MCF 10A (cell line): ENCODE measurements at regions of chr19 and their contacts with region 1.

Region 1: DNA sequence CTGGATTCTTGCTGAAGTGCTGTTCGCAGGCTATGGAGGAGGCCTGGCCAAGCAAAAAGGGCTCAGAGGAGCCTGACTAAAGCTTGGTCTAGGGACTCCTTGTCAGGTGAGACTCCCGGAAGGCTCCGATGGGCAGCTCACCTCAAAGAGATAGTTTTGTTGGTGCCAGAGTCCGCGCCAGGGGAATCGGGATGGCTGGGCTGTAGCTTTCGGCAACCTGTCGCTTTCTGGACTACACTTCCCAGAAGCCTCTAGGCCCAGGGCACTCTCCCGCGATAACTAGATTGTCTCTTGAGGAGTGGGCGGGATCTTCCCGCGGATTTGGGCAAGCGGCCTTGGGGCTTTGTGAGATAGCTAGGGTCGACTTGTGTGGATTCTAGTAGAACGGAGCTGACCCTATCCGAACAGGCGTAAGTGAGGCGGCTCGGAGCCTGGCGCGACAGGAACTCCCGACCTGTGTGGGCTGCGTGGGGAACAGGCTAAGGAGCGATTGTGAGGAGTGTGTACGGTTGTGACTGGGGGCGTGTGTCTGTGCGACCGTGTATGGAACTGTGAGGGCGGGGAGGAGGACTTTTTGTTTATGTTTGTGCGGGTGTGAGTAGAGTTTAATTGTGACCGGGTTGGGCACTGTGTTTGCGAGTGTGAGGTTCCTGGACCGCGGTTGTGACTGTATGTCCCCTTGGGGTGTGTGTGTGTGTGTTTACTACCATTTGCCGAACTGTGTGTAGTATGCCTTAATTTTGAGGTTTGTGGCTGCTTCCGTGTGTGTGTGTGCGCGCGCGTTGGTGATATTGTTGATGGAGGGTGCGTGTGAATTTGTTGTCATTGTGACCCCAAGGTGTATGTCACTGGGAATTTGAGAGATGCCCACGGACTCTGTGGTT is at the start of gene ZNF345:
- DNase-seq: peak; percentile 91
- H3K4me3 Mint-ChIP-seq: no peak within 1 kb of the TSS
- H3K27ac Mint-ChIP-seq: no peak within 1 kb of the TSS
- H3K4me1 Mint-ChIP-seq: no peaks in the 10 kb centered on the region
- H3K27me3 Mint-ChIP-seq: no peaks in the 10 kb centered on the region
- CTCF ChIP-seq: no peak
- total RNA-seq, gene ZNF345: 1.1 and 2.0 TPM in 2 replicates

Region 2: GRCh38 chr19:36378625-36379509 is 471.9 kb before region 1 on chr19 and contains the start of gene ZFP14:
- CTCF ChIA-PET with region 1: no interaction called
- POLR2A ChIA-PET with region 1: interaction called, 8 read pairs
- intact Hi-C with region 1: loop called (anchors 10 kb)
- DNase-seq: peak; percentile 96
- H3K4me3 Mint-ChIP-seq: peak within 1 kb of the TSS; percentile 94
- H3K27ac Mint-ChIP-seq: peak within 1 kb of the TSS; percentile 82
- H3K4me1 Mint-ChIP-seq: peaks cover 8% of the 10 kb centered on the region
- H3K27me3 Mint-ChIP-seq: no peaks in the 10 kb centered on the region
- CTCF ChIP-seq: peak; percentile 30
- total RNA-seq, gene ZFP14: 1.5 and 1.7 TPM in 2 replicates

Region 3: DNA sequence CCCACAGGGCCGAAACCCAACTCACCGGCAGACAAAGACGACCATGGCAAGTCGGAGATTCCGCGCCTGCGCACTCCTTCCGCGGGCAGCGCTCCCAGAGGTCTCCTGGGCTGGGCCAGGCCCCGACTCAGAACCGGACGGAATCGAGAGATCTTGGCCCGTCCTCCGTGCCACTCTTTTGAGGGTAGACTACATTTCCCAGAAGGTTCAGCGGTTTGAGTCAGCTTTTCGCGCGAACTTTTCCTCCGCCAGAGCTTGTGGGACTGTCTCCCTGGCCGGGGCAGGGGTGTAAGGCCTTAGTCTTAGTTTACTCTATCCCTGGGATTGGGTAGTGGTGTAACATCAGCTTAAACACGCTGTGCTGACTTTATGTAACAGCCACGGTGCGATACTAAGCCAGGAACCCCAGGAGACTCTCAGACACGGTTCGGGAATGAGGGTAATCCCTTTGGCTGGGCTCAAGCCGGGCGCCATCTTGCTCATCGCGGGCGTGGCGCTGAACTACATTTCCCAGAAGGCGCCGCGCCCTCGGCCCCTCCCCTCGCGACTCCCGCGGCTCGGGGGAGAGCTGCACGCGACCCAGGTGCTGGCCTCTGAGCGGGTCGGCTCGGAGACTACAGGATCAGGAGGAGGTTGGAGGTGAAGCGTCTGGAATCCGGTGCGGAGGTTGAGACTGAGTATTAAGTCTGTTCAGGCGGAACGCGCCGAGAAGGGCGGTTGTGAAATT is 322.4 kb before region 1 on chr19 and contains the start of gene ZNF260:
- CTCF ChIA-PET with region 1: no interaction called
- POLR2A ChIA-PET with region 1: interaction called, 13 read pairs
- intact Hi-C with region 1: loop called (anchors 2 kb)
- DNase-seq: peak; percentile 95
- H3K4me3 Mint-ChIP-seq: peak within 1 kb of the TSS; percentile 96
- H3K27ac Mint-ChIP-seq: peak within 1 kb of the TSS; percentile 99
- H3K4me1 Mint-ChIP-seq: peaks cover 9% of the 10 kb centered on the region
- H3K27me3 Mint-ChIP-seq: no peaks in the 10 kb centered on the region
- CTCF ChIP-seq: no peak
- total RNA-seq, gene ZNF260: 13.8 and 14.5 TPM in 2 replicates

Region 4: DNA sequence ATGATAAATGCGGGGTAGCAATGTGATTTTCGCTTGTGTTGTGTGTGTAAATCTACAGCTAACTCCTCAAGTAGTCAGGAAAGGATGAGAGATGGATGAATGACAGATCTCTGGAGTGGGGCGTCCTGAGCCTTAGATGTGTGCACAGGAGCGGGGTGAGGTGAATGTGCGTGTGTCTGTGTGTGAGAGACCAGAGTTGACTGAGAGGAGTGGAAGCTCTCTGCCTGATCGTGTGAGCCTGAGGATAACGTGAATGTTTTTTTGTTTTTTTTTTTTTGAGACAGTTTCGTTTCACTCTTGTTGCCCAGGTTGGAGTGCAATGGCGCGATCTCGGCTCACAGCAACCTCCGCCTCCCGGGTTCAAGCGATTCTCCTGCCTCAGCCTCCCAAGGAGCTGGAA is 185.0 kb before region 1 on chr19:
- CTCF ChIA-PET with region 1: no interaction called
- POLR2A ChIA-PET with region 1: interaction called, 18 read pairs
- intact Hi-C with region 1: no loop called
- DNase-seq: no peak
- H3K4me3 Mint-ChIP-seq: peak overlapping the region; percentile 94
- H3K27ac Mint-ChIP-seq: peak overlapping the region; percentile 93
- H3K4me1 Mint-ChIP-seq: peaks cover 6% of the 10 kb centered on the region
- H3K27me3 Mint-ChIP-seq: no peaks in the 10 kb centered on the region
- CTCF ChIP-seq: no peak

Region 5: GRCh38 chr19:36796076-36796992 is 54.5 kb before region 1 on chr19:
- CTCF ChIA-PET with region 1: no interaction called
- POLR2A ChIA-PET with region 1: no interaction called
- intact Hi-C with region 1: no loop called
- DNase-seq: no peak
- H3K4me3 Mint-ChIP-seq: no peak overlapping the region
- H3K27ac Mint-ChIP-seq: no peak overlapping the region
- H3K4me1 Mint-ChIP-seq: no peaks in the 10 kb centered on the region
- H3K27me3 Mint-ChIP-seq: no peaks in the 10 kb centered on the region
- CTCF ChIP-seq: no peak

Region 6: DNA sequence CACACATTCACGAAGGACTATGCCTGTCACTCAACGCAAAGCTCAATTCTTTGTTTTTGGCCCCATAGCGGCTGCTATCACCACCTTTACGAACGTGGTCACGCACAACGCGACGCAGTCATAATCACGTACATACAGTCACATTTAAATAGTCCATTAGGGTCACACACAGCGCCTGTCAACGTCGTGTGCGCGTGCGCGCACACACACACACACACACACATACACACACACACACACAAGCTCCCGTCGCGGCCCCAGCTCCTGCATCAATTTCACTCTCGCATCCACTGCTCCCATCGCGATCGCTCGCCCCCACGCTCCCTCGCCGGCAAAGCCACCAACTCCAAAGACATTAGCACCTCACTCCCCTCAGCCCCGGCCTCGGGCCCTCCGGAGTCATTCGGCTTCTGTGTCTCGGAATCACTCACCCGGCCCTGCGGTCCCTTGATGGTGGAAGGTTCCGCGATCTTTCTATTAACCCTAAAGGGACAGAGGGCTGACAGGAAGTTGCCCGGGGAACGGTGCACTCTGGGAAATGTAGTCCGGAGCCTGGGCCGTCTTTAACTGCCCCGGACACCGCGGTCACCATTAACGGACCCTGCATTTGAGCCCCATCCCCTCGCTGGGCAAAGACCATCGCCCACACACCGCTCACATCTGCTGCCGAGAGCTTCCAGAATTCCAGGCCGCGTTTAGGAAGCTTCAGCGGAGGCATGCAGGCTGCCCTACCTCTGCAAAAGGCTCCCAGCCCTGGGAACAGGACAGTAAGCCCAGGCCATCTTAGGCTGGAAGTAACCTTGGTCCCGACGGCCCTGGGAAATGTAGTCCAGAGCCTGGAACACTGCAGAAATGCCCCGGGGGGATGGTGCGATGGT is 12.7 kb before region 1 on chr19 and contains the start of gene ZNF790:
- CTCF ChIA-PET with region 1: interaction called, 14 read pairs
- POLR2A ChIA-PET with region 1: interaction called, 115 read pairs
- intact Hi-C with region 1: loop called (anchors 1 kb)
- DNase-seq: peak; percentile 79
- H3K4me3 Mint-ChIP-seq: no peak within 1 kb of the TSS
- H3K27ac Mint-ChIP-seq: no peak within 1 kb of the TSS
- H3K4me1 Mint-ChIP-seq: no peaks in the 10 kb centered on the region
- H3K27me3 Mint-ChIP-seq: no peaks in the 10 kb centered on the region
- CTCF ChIP-seq: no peak
- total RNA-seq, gene ZNF790: 8.2 and 8.7 TPM in 2 replicates

Region 7: GRCh38 chr19:37217855-37218591 is 367.2 kb after region 1 on chr19 and contains the start of gene ZNF383:
- CTCF ChIA-PET with region 1: no interaction called
- POLR2A ChIA-PET with region 1: interaction called, 12 read pairs
- intact Hi-C with region 1: no loop called
- DNase-seq: peak; percentile 92
- H3K4me3 Mint-ChIP-seq: peak within 1 kb of the TSS; percentile 89
- H3K27ac Mint-ChIP-seq: peak within 1 kb of the TSS; percentile 90
- H3K4me1 Mint-ChIP-seq: peaks cover 21% of the 10 kb centered on the region
- H3K27me3 Mint-ChIP-seq: no peaks in the 10 kb centered on the region
- CTCF ChIP-seq: no peak
- total RNA-seq, gene ZNF383: 7.4 and 9.2 TPM in 2 replicates

Region 8: GRCh38 chr19:37594304-37594981 is 743.6 kb after region 1 on chr19 and contains the starts of genes ZNF540 and ZNF571:
- CTCF ChIA-PET with region 1: no interaction called
- POLR2A ChIA-PET with region 1: interaction called, 14 read pairs
- intact Hi-C with region 1: no loop called
- DNase-seq: peak; percentile 97
- H3K4me3 Mint-ChIP-seq: peak within 1 kb of the TSS; percentile 96
- H3K27ac Mint-ChIP-seq: peak within 1 kb of the TSS; percentile 98
- H3K4me1 Mint-ChIP-seq: peaks cover 4% of the 10 kb centered on the region
- H3K27me3 Mint-ChIP-seq: no peaks in the 10 kb centered on the region
- CTCF ChIP-seq: no peak
- total RNA-seq, gene ZNF540: 1.1 TPM in 2 replicates
- total RNA-seq, gene ZNF571: 4.2 and 6.3 TPM in 2 replicates